Activated naive CD8-positive, alpha-beta T cell treated with anti-CD3 and anti-CD28 coated beads, Interleukin-2, amount 10 ng/mL, durations not matched to agents 7 days and 5 days (primary cell): ENCODE measurements at regions of chr9 and their contacts with region 1.

Region 1: GRCh38 chr9:22065431-22066200 is 56.5 kb upstream of the CDKN2B start:
- DNase-seq: no peak
- ATAC-seq: peak; percentile 77
- H3K4me3 Mint-ChIP-seq: peak overlapping the region; percentile 65
- H3K27ac Mint-ChIP-seq: peak overlapping the region; percentile 86
- H3K4me1 Mint-ChIP-seq: peaks cover 53% of the 10 kb centered on the region
- H3K27me3 Mint-ChIP-seq: no peaks in the 10 kb centered on the region

Region 2: GRCh38 chr9:22079873-22080341 is 14.3 kb after region 1 on chr9:
- POLR2A ChIA-PET with region 1: interaction called, 11 read pairs
- DNase-seq: peak; percentile 42
- ATAC-seq: peak; percentile 95
- H3K4me3 Mint-ChIP-seq: peak overlapping the region; percentile 71
- H3K27ac Mint-ChIP-seq: peak overlapping the region; percentile 98
- H3K4me1 Mint-ChIP-seq: peaks cover 55% of the 10 kb centered on the region
- H3K27me3 Mint-ChIP-seq: no peaks in the 10 kb centered on the region